Heart right ventricle (tissue), 16 donors: ENCODE measurements at regions of chr11 and their contacts with region 1.

Region 1: DNA sequence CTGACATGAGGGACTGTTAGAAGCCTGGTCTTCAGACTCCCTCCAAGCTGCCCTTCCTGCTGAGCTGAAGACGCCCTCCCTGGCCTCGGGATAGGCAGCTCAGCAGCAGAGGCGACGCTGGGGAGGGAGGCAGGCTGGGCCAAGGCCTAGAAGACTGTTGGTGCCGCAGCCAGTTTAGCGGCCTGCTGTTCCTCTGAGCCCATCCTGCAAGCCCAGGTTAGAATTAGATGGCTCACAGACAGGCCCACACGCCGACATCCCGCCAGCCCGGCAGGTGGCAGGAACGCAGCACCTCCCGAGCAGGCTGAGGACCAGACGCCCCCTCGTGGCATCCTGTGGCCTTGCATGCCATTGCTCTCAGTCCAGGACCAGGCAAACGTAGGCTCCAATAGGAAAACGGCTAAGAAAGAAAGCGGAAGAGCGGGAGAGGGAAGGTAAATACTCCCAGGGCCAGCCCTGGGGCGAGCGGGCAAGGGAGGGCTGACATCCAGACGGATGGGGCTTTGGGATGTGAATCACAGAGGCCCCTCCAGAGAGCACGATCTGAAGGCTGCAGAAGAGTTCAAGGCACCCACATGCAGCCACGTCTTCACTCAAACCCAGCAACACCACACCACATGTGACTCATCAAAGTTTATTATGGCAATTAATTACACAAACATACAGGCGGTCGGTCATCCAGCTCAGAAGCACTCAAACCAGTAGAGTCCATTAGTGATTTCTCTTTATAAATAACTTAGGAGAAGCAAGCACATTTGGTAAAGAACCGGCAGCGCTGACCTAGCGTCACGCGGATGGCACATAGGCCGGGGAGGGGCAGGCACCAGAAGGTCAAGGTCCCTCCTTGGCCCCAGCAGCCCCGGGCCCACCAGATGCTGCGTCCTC is 27.6 kb downstream of the CD5 start:
- DNase-seq: peak; percentile 85 to 86
- ATAC-seq: peak; percentile 73 to 92 (median 88)
- H3K4me3 ChIP-seq: no peak overlapping the region
- H3K27ac ChIP-seq: peak overlapping the region in 3 of 10 donors; percentile 3 to 54 (median 32)
- H3K4me1 ChIP-seq: peaks cover 0 to 26% (median 13%) of the 10 kb centered on the region in 9 donors
- H3K27me3 ChIP-seq: no peaks in the 10 kb centered on the region
- CTCF ChIP-seq: peak; percentile 95 to 100 (median 99)

Region 2: GRCh38 chr11:60767388-60767811 is 362.5 kb before region 1 on chr11:
- intact Hi-C with region 1: loop called in 1 of 10 experiments (anchors 5 kb)
- DNase-seq: no peak
- ATAC-seq: peak in 1 of 8 donors; percentile 31
- H3K4me3 ChIP-seq: no peak overlapping the region
- H3K27ac ChIP-seq: no peak overlapping the region
- H3K4me1 ChIP-seq: no peaks in the 10 kb centered on the region
- H3K27me3 ChIP-seq: peaks cover 6 to 78% (median 37%) of the 10 kb centered on the region in 7 donors
- CTCF ChIP-seq: peak in 7 of 9 donors; percentile 25 to 54 (median 41)

Region 3: GRCh38 chr11:60831143-60831500 is 298.8 kb before region 1 on chr11:
- intact Hi-C with region 1: loop called in 7 of 10 experiments (anchors 2 to 10 kb)
- DNase-seq: peak; percentile 81 to 86
- ATAC-seq: peak; percentile 83 to 94 (median 89)
- H3K4me3 ChIP-seq: no peak overlapping the region
- H3K27ac ChIP-seq: no peak overlapping the region
- H3K4me1 ChIP-seq: peaks cover 0 to 30% (median 0%) of the 10 kb centered on the region in 9 donors
- H3K27me3 ChIP-seq: no peaks in the 10 kb centered on the region
- CTCF ChIP-seq: peak; percentile 92 to 98 (median 94)

Region 4: GRCh38 chr11:60970369-60970774 is 159.5 kb before region 1 on chr11:
- intact Hi-C with region 1: loop called in 5 of 10 experiments (anchors 1 to 2 kb)
- DNase-seq: peak; percentile 50 to 69
- ATAC-seq: peak; percentile 53 to 88 (median 74)
- H3K4me3 ChIP-seq: no peak overlapping the region
- H3K27ac ChIP-seq: no peak overlapping the region
- H3K4me1 ChIP-seq: peaks cover 0 to 5% (median 0%) of the 10 kb centered on the region in 9 donors
- H3K27me3 ChIP-seq: peaks cover 0 to 9% (median 0%) of the 10 kb centered on the region in 7 donors
- CTCF ChIP-seq: peak; percentile 70 to 94 (median 90)

Region 5: GRCh38 chr11:61187505-61188130 is 57.7 kb after region 1 on chr11:
- intact Hi-C with region 1: loop called in 2 of 10 experiments (anchors 5 kb)
- DNase-seq: peak; percentile 56 to 76
- ATAC-seq: peak in 7 of 8 donors; percentile 46 to 81 (median 71)
- H3K4me3 ChIP-seq: no peak overlapping the region
- H3K27ac ChIP-seq: no peak overlapping the region
- H3K4me1 ChIP-seq: peaks cover 0 to 4% (median 0%) of the 10 kb centered on the region in 9 donors
- H3K27me3 ChIP-seq: peaks cover 0 to 45% (median 5%) of the 10 kb centered on the region in 7 donors
- CTCF ChIP-seq: peak; percentile 80 to 96 (median 93)